ENCODE measurements at regions of chr1 and their contacts with region 1.

Region 1: GRCh38 chr1:206766251-206766856 is 4.2 kb upstream of the IL19 start:
- DNase-seq: peak; percentile 79
- H3K4me3 Mint-ChIP-seq: peak overlapping the region; percentile 6
- H3K27ac Mint-ChIP-seq: peak overlapping the region; percentile 29
- H3K4me1 Mint-ChIP-seq: peaks cover 59% of the 10 kb centered on the region
- H3K27me3 Mint-ChIP-seq: peaks cover 66% of the 10 kb centered on the region

Region 2: DNA sequence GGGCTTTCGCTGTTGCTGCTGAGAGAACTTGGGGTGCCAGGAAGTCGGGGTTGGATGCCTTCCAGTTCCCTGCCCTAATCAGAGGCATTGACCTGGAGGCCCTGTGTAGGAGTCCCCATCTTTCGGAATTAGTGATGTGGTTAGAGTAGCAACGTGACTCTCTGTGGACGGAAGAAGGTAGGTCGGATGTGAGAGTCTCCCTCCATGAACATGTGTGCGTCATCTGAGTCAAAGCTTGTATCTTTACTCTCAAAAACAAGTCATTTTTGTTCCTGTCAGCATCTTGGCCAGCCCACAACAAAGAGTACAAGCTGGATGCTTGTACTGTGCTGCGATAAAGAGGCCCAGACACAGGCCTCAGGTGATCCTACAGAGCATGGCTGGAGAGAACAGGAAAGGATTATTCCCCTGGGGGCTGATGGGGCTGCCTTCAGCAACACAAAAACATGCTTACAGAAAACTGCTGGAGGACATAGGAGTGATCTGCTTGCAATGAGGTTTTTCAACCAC is 36.9 kb after region 1 on chr1:
- CTCF ChIA-PET with region 1: interaction called, 23 read pairs
- DNase-seq: peak; percentile 89
- H3K4me3 Mint-ChIP-seq: no peak overlapping the region
- H3K27ac Mint-ChIP-seq: peak overlapping the region; percentile 86
- H3K4me1 Mint-ChIP-seq: peaks cover 62% of the 10 kb centered on the region
- H3K27me3 Mint-ChIP-seq: peaks cover 51% of the 10 kb centered on the region

Region 3: GRCh38 chr1:206935491-206936067 is 169.2 kb after region 1 on chr1:
- CTCF ChIA-PET with region 1: no interaction called
- DNase-seq: peak; percentile 74
- H3K4me3 Mint-ChIP-seq: no peak overlapping the region
- H3K27ac Mint-ChIP-seq: no peak overlapping the region
- H3K4me1 Mint-ChIP-seq: peaks cover 14% of the 10 kb centered on the region
- H3K27me3 Mint-ChIP-seq: peaks cover 35% of the 10 kb centered on the region

Region 4: GRCh38 chr1:206955476-206956451 is 189.4 kb after region 1 on chr1:
- CTCF ChIA-PET with region 1: no interaction called
- DNase-seq: no peak
- H3K4me3 Mint-ChIP-seq: no peak overlapping the region
- H3K27ac Mint-ChIP-seq: no peak overlapping the region
- H3K4me1 Mint-ChIP-seq: peaks cover 15% of the 10 kb centered on the region
- H3K27me3 Mint-ChIP-seq: peaks cover 25% of the 10 kb centered on the region